Endothelial cell of umbilical vein (primary cell): ENCODE measurements at regions of chr4 and their contacts with region 1.

Region 1: DNA sequence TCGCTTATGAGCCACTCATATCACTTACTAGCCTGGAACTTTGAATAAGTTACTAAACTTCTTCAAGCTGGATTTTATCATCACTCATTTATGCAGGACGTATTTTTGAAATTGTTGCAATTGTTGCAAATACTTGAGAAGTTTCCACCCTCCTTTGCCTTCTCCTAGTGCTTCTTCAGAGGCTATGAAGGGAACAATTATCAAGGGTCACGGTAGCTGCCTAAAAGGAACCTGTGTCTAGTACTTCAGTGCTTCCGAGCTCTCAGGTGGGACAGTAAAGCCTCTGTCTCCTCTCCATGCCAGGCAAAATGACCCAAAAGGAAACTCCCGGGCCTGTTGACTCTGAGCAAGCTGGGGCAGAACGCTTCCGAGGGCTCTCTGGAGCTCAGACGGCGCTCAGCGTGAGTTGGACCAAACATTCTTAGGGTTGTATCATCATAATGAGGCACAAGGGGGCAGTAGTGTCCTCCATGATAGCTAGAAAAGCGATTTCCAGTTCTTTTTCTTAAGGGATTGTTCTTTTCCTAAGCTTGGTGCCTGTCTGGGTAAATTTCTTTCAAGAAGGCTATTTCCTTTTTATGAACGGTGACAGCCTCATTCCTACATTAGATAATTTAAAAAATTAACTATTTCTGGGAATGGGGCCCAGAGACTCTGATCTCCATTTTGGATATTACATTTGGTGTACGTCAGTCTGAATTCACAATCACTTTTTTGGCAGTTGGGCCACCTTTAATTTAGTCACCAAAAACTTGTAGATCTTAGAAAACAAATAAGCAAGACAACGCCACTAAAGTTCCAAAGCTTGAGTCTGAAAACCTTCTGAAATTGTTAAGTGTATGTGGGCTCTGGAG is 73.1 kb downstream of the PACRGL start:
- DNase-seq: peak; percentile 81
- H3K4me3 ChIP-seq: no peak overlapping the region
- H3K27ac ChIP-seq: peak overlapping the region; percentile 1
- H3K4me1 ChIP-seq: peaks cover 15% of the 10 kb centered on the region
- H3K27me3 ChIP-seq: no peaks in the 10 kb centered on the region
- CTCF ChIP-seq: peak; percentile 63 to 72
- POLR2A ChIP-seq: no peak

Region 2: GRCh38 chr4:20760053-20760452 is 13.3 kb before region 1 on chr4:
- CTCF ChIA-PET with region 1: interaction called, 11 read pairs
- POLR2A ChIA-PET with region 1: no interaction called
- dilution Hi-C with region 1: no loop called
- intact Hi-C with region 1: no loop called
- DNase-seq: no peak
- H3K4me3 ChIP-seq: no peak overlapping the region
- H3K27ac ChIP-seq: no peak overlapping the region
- H3K4me1 ChIP-seq: no peaks in the 10 kb centered on the region
- H3K27me3 ChIP-seq: no peaks in the 10 kb centered on the region
- CTCF ChIP-seq: no peak
- POLR2A ChIP-seq: no peak

Region 3: DNA sequence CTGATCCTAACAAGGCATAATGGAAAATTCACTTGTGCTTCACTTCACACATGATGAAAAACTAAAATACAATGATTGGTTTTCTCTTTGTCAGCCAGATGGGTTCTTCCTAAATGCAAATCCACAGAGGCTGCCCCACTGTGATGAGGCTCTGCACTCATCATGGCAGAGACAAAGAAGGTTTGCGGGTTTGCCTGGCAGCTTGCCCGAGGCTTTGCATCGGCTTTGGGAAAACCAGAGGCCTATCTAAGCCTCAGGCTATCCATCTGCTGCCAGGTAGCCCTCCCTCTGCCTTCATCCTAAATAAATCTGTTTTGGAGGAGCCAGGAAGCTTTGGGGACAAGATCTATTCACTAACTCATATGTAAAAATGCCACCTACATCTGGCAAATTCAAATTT is 171.1 kb after region 1 on chr4:
- CTCF ChIA-PET with region 1: interaction called, 11 read pairs
- POLR2A ChIA-PET with region 1: no interaction called
- dilution Hi-C with region 1: no loop called
- intact Hi-C with region 1: loop called (anchors 10 kb)
- DNase-seq: no peak
- H3K4me3 ChIP-seq: no peak overlapping the region
- H3K27ac ChIP-seq: no peak overlapping the region
- H3K4me1 ChIP-seq: no peaks in the 10 kb centered on the region
- H3K27me3 ChIP-seq: no peaks in the 10 kb centered on the region
- CTCF ChIP-seq: no peak
- POLR2A ChIP-seq: no peak

Region 4: DNA sequence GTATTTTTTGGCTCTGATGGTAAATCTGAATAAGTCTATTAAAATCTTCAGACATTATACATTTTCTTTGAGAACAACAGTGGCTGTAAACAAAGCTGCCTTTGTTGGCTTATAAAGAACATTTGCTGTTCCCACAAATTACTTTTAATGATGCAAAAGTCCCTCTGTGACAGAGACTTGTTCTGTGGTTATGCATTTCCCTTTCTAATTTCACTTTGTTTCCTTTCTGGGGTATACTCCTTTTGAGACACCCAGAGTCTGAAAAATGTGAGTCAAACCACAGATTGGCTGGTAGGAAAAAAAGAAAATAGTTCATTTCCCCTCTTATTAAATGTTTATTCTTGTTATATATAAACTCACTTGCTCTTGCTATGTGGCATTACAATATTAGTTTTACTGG is 329.3 kb after region 1 on chr4:
- CTCF ChIA-PET with region 1: interaction called, 10 read pairs
- POLR2A ChIA-PET with region 1: no interaction called
- dilution Hi-C with region 1: no loop called
- intact Hi-C with region 1: no loop called
- DNase-seq: no peak
- H3K4me3 ChIP-seq: no peak overlapping the region
- H3K27ac ChIP-seq: no peak overlapping the region
- H3K4me1 ChIP-seq: no peaks in the 10 kb centered on the region
- H3K27me3 ChIP-seq: no peaks in the 10 kb centered on the region
- CTCF ChIP-seq: no peak
- POLR2A ChIP-seq: no peak

Region 5: DNA sequence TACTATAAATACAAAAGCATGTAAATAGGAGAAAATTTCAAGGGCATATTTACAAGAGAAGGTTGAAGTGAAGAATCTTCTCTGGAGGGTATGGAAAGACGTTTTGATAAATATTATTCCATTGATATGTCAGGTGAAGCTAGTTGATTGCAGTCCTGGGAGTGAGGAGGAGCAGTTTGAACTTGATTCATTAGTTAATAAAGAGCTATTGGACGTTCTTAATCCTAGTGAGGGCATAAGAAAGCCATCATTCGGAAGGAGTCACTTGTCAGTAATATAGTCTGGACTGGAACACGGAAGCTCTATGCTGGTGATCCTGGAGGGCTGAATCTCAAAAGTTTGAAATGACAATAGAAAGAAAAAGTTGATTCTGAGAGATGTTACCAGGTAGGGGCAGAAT is 382.0 kb after region 1 on chr4:
- CTCF ChIA-PET with region 1: interaction called, 11 read pairs
- POLR2A ChIA-PET with region 1: no interaction called
- dilution Hi-C with region 1: no loop called
- intact Hi-C with region 1: no loop called
- DNase-seq: no peak
- H3K4me3 ChIP-seq: no peak overlapping the region
- H3K27ac ChIP-seq: no peak overlapping the region
- H3K4me1 ChIP-seq: no peaks in the 10 kb centered on the region
- H3K27me3 ChIP-seq: no peaks in the 10 kb centered on the region
- CTCF ChIP-seq: no peak
- POLR2A ChIP-seq: no peak

Region 6: GRCh38 chr4:21469438-21470300 is 696.3 kb after region 1 on chr4:
- CTCF ChIA-PET with region 1: interaction called, 131 read pairs
- POLR2A ChIA-PET with region 1: no interaction called
- dilution Hi-C with region 1: no loop called
- intact Hi-C with region 1: loop called (anchors 1 kb)
- DNase-seq: peak; percentile 40
- H3K4me3 ChIP-seq: no peak overlapping the region
- H3K27ac ChIP-seq: no peak overlapping the region
- H3K4me1 ChIP-seq: peaks cover 5% of the 10 kb centered on the region
- H3K27me3 ChIP-seq: peaks cover 6 to 9% of the 10 kb centered on the region in 2 experiments
- CTCF ChIP-seq: peak; percentile 25 to 54
- POLR2A ChIP-seq: no peak